AG04449 (cell line): ENCODE measurements at regions of chr1 and their contacts with region 1.

Region 1: GRCh38 chr1:53959664-53960250 is 13.6 kb downstream of the LRRC42 start:
- DNase-seq: no peak
- H3K4me3 ChIP-seq: no peak overlapping the region
- CTCF ChIP-seq: peak; percentile 30

Region 2: GRCh38 chr1:53869454-53870117 is 90.2 kb before region 1 on chr1:
- CTCF ChIA-PET with region 1: interaction called, 29 read pairs
- POLR2A ChIA-PET with region 1: no interaction called
- DNase-seq: no peak
- H3K4me3 ChIP-seq: no peak overlapping the region
- CTCF ChIP-seq: no peak